GM12878 (cell line): ENCODE measurements at regions of chr9 and their contacts with region 1.

Region 1: DNA sequence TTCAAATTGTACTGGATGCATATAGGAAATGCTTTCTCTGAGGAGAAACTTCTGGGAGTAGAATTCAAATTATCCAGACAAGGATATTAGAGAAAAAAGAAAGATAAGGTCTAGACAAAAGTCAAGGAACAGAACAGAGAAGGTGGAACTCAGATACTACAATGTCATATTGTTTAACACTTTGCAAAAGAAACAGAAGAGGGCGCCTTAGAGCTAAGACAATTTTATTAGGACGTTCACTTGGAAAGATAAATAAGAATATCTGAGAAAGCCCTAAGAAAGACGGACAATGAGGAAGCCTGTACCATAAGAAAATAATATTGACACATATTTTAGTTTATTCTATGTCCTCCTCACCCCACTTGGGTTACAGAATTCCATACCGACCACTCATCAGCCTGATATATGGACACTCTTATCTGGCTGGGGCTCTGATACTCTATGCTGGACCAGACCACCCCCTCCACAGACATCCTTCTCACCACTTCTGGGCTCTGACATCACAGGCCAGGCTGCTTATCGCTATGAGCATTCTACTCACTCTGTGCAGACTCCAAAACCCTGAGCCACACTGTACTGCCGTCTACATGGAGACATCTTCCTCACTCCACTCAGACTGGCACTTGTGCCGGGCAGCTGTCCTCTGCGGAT is 9.1 kb upstream of the AK3 start:
- DNase-seq: no peak
- ATAC-seq: peak; percentile 86
- H3K4me3 ChIP-seq: no peak overlapping the region
- H3K27ac ChIP-seq: no peak overlapping the region
- H3K4me1 ChIP-seq: peaks cover 4% of the 10 kb centered on the region; the same call in 1 of the 2 replicates
- H3K27me3 ChIP-seq: no peaks in the 10 kb centered on the region
- CTCF ChIP-seq: peak; percentile 54 to 59 (median 58); a peak in 5 of 6 replicates
- EP300 ChIP-seq: no peak
- POLR2A ChIP-seq: no peak
- RAD21 ChIP-seq: peak; percentile 72

Region 2: DNA sequence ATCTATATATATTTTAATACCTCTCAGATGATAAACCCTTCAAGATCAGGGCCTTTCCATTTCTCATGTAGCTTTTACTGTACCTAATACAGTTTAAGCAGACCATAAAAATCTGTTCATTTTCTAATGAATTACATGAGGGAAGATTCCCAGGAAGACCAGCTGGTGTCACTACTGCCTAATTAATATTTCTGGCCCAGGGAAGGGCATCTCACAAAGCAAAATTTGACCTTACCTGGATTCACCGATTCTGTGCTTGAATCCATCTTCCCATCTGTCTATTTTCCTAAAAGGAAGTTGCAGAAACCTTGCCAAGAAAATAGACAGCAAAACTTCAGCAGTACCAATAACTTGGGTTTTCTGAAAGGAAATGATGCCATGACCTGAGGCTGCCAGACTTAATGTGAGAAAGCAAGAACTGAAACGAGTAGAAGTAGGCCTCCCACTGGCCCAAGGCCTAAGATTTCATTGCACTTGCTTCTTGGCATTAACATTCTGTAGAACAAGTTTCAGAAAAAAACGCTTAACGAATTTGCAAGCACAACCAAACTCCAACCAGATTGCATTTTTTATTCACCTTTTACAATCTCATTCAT is 367.3 kb before region 1 on chr9:
- CTCF ChIA-PET with region 1: interaction called, 5 read pairs
- POLR2A ChIA-PET with region 1: no interaction called
- RAD21 ChIA-PET with region 1: no interaction called
- SMC1A ChIA-PET with region 1: no interaction called
- in situ Hi-C with region 1: no loop called
- intact Hi-C with region 1: loop called (anchors 5 kb)
- DNase-seq: peak; percentile 40
- ATAC-seq: peak; percentile 87
- H3K4me3 ChIP-seq: no peak overlapping the region
- H3K27ac ChIP-seq: no peak overlapping the region
- H3K4me1 ChIP-seq: peaks cover 5% of the 10 kb centered on the region; the same call in 1 of the 2 replicates
- H3K27me3 ChIP-seq: no peaks in the 10 kb centered on the region
- CTCF ChIP-seq: peak; percentile 51 to 73 (median 58); a peak in 5 of 6 replicates
- EP300 ChIP-seq: no peak
- POLR2A ChIP-seq: no peak
- RAD21 ChIP-seq: peak; percentile 87

Region 3: GRCh38 chr9:4657426-4658159 is 92.6 kb before region 1 on chr9:
- CTCF ChIA-PET with region 1: no interaction called
- POLR2A ChIA-PET with region 1: no interaction called
- RAD21 ChIA-PET with region 1: no interaction called
- SMC1A ChIA-PET with region 1: no interaction called
- in situ Hi-C with region 1: no loop called
- intact Hi-C with region 1: no loop called
- DNase-seq: no peak
- ATAC-seq: no peak
- H3K4me3 ChIP-seq: no peak overlapping the region
- H3K27ac ChIP-seq: no peak overlapping the region
- H3K4me1 ChIP-seq: peaks cover 3% of the 10 kb centered on the region
- H3K27me3 ChIP-seq: no peaks in the 10 kb centered on the region
- CTCF ChIP-seq: no peak
- EP300 ChIP-seq: no peak
- POLR2A ChIP-seq: no peak
- RAD21 ChIP-seq: no peak

Region 4: GRCh38 chr9:4780651-4781050 is 30.5 kb after region 1 on chr9:
- CTCF ChIA-PET with region 1: no interaction called
- POLR2A ChIA-PET with region 1: no interaction called
- RAD21 ChIA-PET with region 1: no interaction called
- SMC1A ChIA-PET with region 1: no interaction called
- in situ Hi-C with region 1: no loop called
- intact Hi-C with region 1: no loop called
- DNase-seq: no peak
- ATAC-seq: no peak
- H3K4me3 ChIP-seq: no peak overlapping the region
- H3K27ac ChIP-seq: no peak overlapping the region
- H3K4me1 ChIP-seq: no peaks in the 10 kb centered on the region
- H3K27me3 ChIP-seq: no peaks in the 10 kb centered on the region
- CTCF ChIP-seq: no peak
- EP300 ChIP-seq: no peak
- POLR2A ChIP-seq: no peak
- RAD21 ChIP-seq: no peak

Region 5: DNA sequence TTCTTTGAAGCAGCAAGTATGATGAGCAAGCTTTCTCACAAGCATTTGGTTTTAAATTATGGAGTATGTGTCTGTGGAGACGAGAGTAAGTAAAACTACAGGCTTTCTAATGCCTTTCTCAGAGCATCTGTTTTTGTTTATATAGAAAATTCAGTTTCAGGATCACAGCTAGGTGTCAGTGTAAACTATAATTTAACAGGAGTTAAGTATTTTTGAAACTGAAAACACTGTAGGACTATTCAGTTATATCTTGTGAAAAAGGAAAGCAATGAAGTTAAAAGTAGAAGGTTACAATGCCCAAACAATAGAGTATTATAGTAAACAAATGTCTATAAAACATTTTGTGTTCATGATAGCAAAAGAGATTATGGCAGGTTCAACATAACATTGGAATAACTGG is 323.6 kb after region 1 on chr9:
- CTCF ChIA-PET with region 1: no interaction called
- POLR2A ChIA-PET with region 1: no interaction called
- RAD21 ChIA-PET with region 1: no interaction called
- SMC1A ChIA-PET with region 1: interaction called, 3 read pairs
- in situ Hi-C with region 1: no loop called
- intact Hi-C with region 1: loop called (anchors 10 kb)
- DNase-seq: no peak
- ATAC-seq: peak; percentile 65
- H3K4me3 ChIP-seq: no peak overlapping the region
- H3K27ac ChIP-seq: no peak overlapping the region
- H3K4me1 ChIP-seq: peaks cover 5% of the 10 kb centered on the region; the same call in 1 of the 2 replicates
- H3K27me3 ChIP-seq: no peaks in the 10 kb centered on the region
- CTCF ChIP-seq: peak in 1 of 3 experiments; percentile 49; a peak in 2 of 6 replicates
- EP300 ChIP-seq: no peak
- POLR2A ChIP-seq: no peak
- RAD21 ChIP-seq: peak; percentile 39; the same call in 1 of the 2 replicates

Region 6: GRCh38 chr9:5263351-5264218 is 513.4 kb after region 1 on chr9:
- CTCF ChIA-PET with region 1: interaction called, 3 read pairs
- POLR2A ChIA-PET with region 1: interaction called, 3 read pairs
- RAD21 ChIA-PET with region 1: no interaction called
- SMC1A ChIA-PET with region 1: no interaction called
- in situ Hi-C with region 1: no loop called
- intact Hi-C with region 1: loop called (anchors 5 kb)
- DNase-seq: no peak
- ATAC-seq: peak; percentile 79
- H3K4me3 ChIP-seq: no peak overlapping the region
- H3K27ac ChIP-seq: no peak overlapping the region
- H3K4me1 ChIP-seq: no peaks in the 10 kb centered on the region
- H3K27me3 ChIP-seq: no peaks in the 10 kb centered on the region
- CTCF ChIP-seq: peak; percentile 7 to 17 (median 14); a peak in 1 of 6 replicates
- EP300 ChIP-seq: no peak
- POLR2A ChIP-seq: no peak
- RAD21 ChIP-seq: peak; percentile 33; the same call in 1 of the 2 replicates

Region 7: DNA sequence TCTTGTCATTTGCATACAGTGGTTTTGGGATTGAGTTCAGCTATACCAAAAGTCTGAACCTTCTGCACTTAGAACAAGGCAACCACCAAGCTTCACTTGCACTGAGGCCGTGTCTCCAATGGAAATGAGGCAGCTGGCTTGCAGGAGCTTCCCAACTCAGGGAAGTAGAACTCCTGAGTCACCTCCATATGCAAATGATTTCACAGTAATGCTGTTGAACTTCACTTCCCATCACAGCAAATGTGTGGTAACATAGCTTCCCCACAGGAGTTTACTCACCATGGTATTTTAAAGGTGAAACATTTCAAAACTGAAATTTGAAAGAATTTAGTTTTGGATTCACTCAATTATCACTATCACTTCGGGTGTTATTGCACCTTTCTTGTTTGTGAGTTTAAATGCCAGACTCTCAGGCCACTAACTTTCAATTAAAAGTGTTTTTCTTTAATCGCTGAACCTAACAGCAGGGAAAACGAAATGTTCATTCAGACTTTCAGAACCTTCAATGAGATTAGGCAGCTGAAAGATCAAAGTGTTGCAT is 709.2 kb after region 1 on chr9:
- CTCF ChIA-PET with region 1: no interaction called
- POLR2A ChIA-PET with region 1: no interaction called
- RAD21 ChIA-PET with region 1: no interaction called
- SMC1A ChIA-PET with region 1: no interaction called
- in situ Hi-C with region 1: no loop called
- intact Hi-C with region 1: no loop called
- DNase-seq: no peak
- ATAC-seq: peak; percentile 55
- H3K4me3 ChIP-seq: peak overlapping the region; percentile 35
- H3K27ac ChIP-seq: peak overlapping the region; percentile 81
- H3K4me1 ChIP-seq: peaks cover 32% of the 10 kb centered on the region
- H3K27me3 ChIP-seq: no peaks in the 10 kb centered on the region
- CTCF ChIP-seq: no peak
- EP300 ChIP-seq: peak; percentile 69 to 84; a peak in 2 of 4 replicates
- POLR2A ChIP-seq: no peak
- RAD21 ChIP-seq: no peak